G401 (cell line): ENCODE measurements at regions of chr6 and their contacts with region 1.

Region 1: GRCh38 chr6:34392497-34393190 is at the start of gene NUDT3:
- DNase-seq: peak; percentile 96
- total RNA-seq, gene NUDT3: 8.1 and 10.6 TPM in 2 replicates

Region 2: DNA sequence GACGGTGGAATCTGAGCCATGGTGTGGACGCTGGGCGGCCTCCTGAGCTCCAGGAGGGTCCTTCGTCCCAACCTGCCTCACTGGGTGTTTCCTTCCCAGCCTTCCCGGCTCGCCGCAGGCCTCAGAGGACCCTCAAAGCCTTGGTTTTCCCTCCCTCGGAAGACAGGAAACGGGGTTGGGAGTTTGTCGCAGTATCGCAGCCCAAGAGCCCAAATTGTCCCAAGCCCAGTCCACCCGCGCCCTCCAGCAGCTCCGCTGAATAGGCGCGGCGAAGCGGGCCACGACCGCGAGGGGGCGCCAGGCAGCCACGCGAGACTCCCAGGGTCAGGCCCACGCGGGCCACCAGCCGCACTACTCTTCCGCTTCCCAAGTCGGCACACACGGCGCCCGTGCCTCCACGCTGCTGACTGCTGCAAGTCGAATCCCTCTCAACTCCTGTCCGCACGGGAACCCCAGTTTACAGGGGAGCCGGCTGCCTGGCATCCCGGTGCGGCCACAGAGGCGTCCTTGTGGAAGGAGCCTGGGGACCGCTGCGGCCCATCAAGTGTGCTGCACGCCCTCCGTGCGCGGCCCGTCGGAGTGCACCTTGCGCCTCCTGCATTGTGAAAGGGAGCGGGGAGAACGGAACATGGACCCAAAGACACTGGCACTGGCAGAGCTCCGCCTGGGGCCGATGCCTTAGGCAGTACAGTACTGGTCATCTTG is 196.4 kb before region 1 on chr6:
- in situ Hi-C with region 1: loop called (anchors 25 kb)
- DNase-seq: peak; percentile 81

Region 3: GRCh38 chr6:34447910-34448309 is 55.3 kb after region 1 on chr6:
- in situ Hi-C with region 1: no loop called
- DNase-seq: peak; percentile 97